CD14-positive monocyte (primary cell): ENCODE measurements at regions of chr7 and their contacts with region 1.

Region 1: GRCh38 chr7:130887182-130888016 is 153.4 kb upstream of the KLF14 start:
- DNase-seq: peak in 1 of 3 donors; percentile 53
- H3K4me3 ChIP-seq: no peak overlapping the region
- H3K4me3 Mint-ChIP-seq: no peak overlapping the region
- H3K27ac ChIP-seq: no peak overlapping the region
- H3K27ac Mint-ChIP-seq: peak overlapping the region in 3 of 7 donors; percentile 7 to 56 (median 17)
- H3K4me1 ChIP-seq: no peaks in the 10 kb centered on the region
- H3K4me1 Mint-ChIP-seq: no peaks in the 10 kb centered on the region
- H3K27me3 ChIP-seq: no peaks in the 10 kb centered on the region
- H3K27me3 Mint-ChIP-seq: no peaks in the 10 kb centered on the region
- CTCF ChIP-seq: no peak

Region 2: DNA sequence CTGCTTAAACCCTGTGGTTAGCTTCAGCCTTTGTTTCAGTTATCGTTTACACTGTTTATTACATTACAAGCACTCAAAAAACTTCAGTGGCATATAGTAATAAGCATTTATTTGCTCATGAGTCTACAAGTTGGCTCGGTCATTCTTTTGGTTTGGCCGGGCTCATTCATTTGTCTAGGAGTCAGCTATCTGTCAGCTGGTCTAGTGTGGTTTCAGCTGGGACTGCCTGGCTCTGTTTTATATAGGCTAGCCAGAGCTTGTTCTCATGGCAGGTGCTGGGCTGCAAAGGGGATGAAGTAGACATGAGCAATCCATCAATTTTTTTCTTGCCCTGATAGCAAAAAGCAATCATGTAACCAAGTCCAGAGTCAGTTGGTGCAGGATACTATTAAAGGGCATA is 543.9 kb after region 1 on chr7:
- intact Hi-C with region 1: loop called in 1 of 2 experiments (anchors 10 kb)
- DNase-seq: no peak
- H3K4me3 ChIP-seq: no peak overlapping the region
- H3K4me3 Mint-ChIP-seq: no peak overlapping the region
- H3K27ac ChIP-seq: no peak overlapping the region
- H3K27ac Mint-ChIP-seq: peak overlapping the region in 1 of 7 donors; percentile 18
- H3K4me1 ChIP-seq: no peaks in the 10 kb centered on the region
- H3K4me1 Mint-ChIP-seq: peaks cover 2% of the 10 kb centered on the region
- H3K27me3 ChIP-seq: no peaks in the 10 kb centered on the region
- H3K27me3 Mint-ChIP-seq: peaks cover 0 to 3% (median 0%) of the 10 kb centered on the region in 3 donors
- CTCF ChIP-seq: no peak